Caco-2 (cell line): ENCODE measurements at regions of chr6 and their contacts with region 1.

Region 1: DNA sequence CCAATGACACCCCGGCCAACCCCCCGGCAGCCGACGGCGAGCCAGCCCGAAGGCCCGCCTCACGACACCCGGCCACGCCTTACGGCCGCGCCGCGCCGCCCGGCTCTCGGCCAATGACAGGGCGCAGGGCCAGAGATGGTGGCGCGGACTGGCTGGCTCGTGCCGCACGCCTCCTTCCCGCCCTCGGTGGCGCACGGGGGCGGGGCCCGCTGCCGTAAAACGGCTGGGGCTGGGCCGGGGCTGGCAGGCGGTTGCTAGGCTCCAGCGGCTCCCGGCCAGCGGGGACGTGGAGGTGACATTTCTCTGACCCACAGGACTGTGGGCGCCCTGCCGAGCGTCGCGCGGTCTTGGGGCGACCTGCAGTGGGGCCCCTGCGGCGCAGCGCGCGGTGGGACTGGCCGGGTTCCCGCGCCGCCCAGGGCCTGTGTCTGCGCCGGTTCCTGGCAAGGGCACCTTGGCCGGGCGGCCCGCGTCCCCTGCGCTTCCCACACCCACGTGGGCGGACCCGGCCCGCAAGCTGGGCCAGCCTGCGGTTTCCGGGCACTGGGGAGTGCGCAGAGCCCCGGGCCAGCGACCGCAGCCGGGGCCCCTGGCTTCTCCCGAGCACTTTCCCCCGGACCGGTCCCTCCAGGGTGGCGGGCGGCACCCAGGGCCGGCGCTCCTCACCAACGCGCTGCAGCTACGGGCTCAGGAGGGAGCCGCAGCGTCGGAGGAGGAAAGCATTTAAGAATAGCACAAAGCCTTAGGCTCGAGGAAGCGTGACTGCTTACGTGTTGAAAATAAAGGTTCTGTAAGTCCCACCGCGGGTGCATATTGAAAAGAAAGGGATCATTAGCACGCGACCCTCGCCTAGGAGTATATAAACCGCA is at the start of gene MPC1:
- DNase-seq: peak; percentile 94 to 98
- H3K4me3 ChIP-seq: peak within 1 kb of the TSS; percentile 86
- H3K4me3 Mint-ChIP-seq: peak within 1 kb of the TSS; percentile 82
- H3K27ac Mint-ChIP-seq: peak within 1 kb of the TSS; percentile 87
- H3K4me1 ChIP-seq: peaks cover 21% of the 10 kb centered on the region
- H3K4me1 Mint-ChIP-seq: peaks cover 13% of the 10 kb centered on the region
- H3K27me3 ChIP-seq: no peaks in the 10 kb centered on the region
- H3K27me3 Mint-ChIP-seq: no peaks in the 10 kb centered on the region
- CTCF ChIP-seq: no peak
- total RNA-seq, gene MPC1: 19.7 and 20.4 TPM in 2 replicates

Region 2: GRCh38 chr6:166275714-166276166 is 107.4 kb before region 1 on chr6:
- CTCF ChIA-PET with region 1: interaction called, 4 read pairs
- POLR2A ChIA-PET with region 1: no interaction called
- intact Hi-C with region 1: loop called (anchors 1 kb)
- DNase-seq: peak in 1 of 2 experiments; percentile 84
- H3K4me3 ChIP-seq: no peak overlapping the region
- H3K4me3 Mint-ChIP-seq: no peak overlapping the region
- H3K27ac Mint-ChIP-seq: no peak overlapping the region
- H3K4me1 ChIP-seq: no peaks in the 10 kb centered on the region
- H3K4me1 Mint-ChIP-seq: no peaks in the 10 kb centered on the region
- H3K27me3 ChIP-seq: no peaks in the 10 kb centered on the region
- H3K27me3 Mint-ChIP-seq: no peaks in the 10 kb centered on the region
- CTCF ChIP-seq: peak; percentile 96 to 99

Region 3: GRCh38 chr6:166313255-166314070 is 69.7 kb before region 1 on chr6:
- CTCF ChIA-PET with region 1: no interaction called
- POLR2A ChIA-PET with region 1: no interaction called
- intact Hi-C with region 1: loop called (anchors 1 kb)
- DNase-seq: peak in 1 of 2 experiments; percentile 41
- H3K4me3 ChIP-seq: no peak overlapping the region
- H3K4me3 Mint-ChIP-seq: no peak overlapping the region
- H3K27ac Mint-ChIP-seq: no peak overlapping the region
- H3K4me1 ChIP-seq: 0 out of 2 replicates have a peak, but pooled peaks cover 3% of the 10 kb centered on the region
- H3K4me1 Mint-ChIP-seq: peaks cover 6% of the 10 kb centered on the region
- H3K27me3 ChIP-seq: no peaks in the 10 kb centered on the region
- H3K27me3 Mint-ChIP-seq: no peaks in the 10 kb centered on the region
- CTCF ChIP-seq: peak; percentile 64 to 77

Region 4: GRCh38 chr6:166351715-166352285 is 31.4 kb before region 1 on chr6:
- CTCF ChIA-PET with region 1: interaction called, 3 read pairs
- POLR2A ChIA-PET with region 1: no interaction called
- intact Hi-C with region 1: loop called (anchors 1 kb)
- DNase-seq: peak; percentile 34 to 63
- H3K4me3 ChIP-seq: peak overlapping the region; percentile 22; the same call in 1 of the 2 replicates
- H3K4me3 Mint-ChIP-seq: peak overlapping the region; percentile 59
- H3K27ac Mint-ChIP-seq: no peak overlapping the region
- H3K4me1 ChIP-seq: peaks cover 5% of the 10 kb centered on the region
- H3K4me1 Mint-ChIP-seq: peaks cover 5% of the 10 kb centered on the region
- H3K27me3 ChIP-seq: no peaks in the 10 kb centered on the region
- H3K27me3 Mint-ChIP-seq: no peaks in the 10 kb centered on the region
- CTCF ChIP-seq: no peak

Region 5: GRCh38 chr6:166627033-166627874 is 244.1 kb after region 1 on chr6 and contains the start of gene RPS6KA2:
- CTCF ChIA-PET with region 1: no interaction called
- POLR2A ChIA-PET with region 1: no interaction called
- intact Hi-C with region 1: loop called (anchors 1 kb)
- DNase-seq: peak; percentile 99 to 100
- H3K4me3 ChIP-seq: peak within 1 kb of the TSS; percentile 59
- H3K4me3 Mint-ChIP-seq: peak within 1 kb of the TSS; percentile 86
- H3K27ac Mint-ChIP-seq: peak within 1 kb of the TSS; percentile 45
- H3K4me1 ChIP-seq: peaks cover 14% of the 10 kb centered on the region
- H3K4me1 Mint-ChIP-seq: no peaks in the 10 kb centered on the region
- H3K27me3 ChIP-seq: peaks cover 10% of the 10 kb centered on the region
- H3K27me3 Mint-ChIP-seq: peaks cover 13% of the 10 kb centered on the region
- CTCF ChIP-seq: no peak
- total RNA-seq, gene RPS6KA2: 5.5 and 5.6 TPM in 2 replicates